Panc1 (cell line): ENCODE measurements at regions of chr20 and their contacts with region 1.

Region 1: GRCh38 chr20:56735191-56735711 is 106.1 kb downstream of the TFAP2C start:
- DNase-seq: no peak
- ATAC-seq: no peak
- H3K4me3 ChIP-seq: no peak overlapping the region
- H3K27ac ChIP-seq: no peak overlapping the region
- H3K4me1 ChIP-seq: no peaks in the 10 kb centered on the region
- H3K27me3 ChIP-seq: no peaks in the 10 kb centered on the region
- CTCF ChIP-seq: no peak

Region 2: DNA sequence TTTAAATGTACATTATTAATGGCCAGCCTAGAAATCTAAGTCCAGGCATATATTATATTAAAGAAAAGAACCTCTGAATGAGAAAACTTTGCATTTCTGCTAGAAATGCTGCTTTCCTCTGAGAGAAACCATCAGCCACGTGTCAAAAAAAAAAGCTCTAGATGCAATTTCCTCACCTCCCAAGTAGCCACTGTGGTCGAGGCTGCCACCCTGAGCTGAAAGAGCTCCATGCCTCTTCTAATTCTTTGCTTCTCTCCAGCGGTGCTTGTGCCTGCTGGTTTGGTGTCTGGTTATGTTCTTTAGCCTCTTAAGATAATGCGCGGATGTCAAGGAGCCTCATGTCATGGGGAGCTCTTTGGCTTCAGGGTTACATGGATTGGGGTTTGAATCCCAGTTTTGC is 209.8 kb after region 1 on chr20:
- CTCF ChIA-PET with region 1: no interaction called
- POLR2A ChIA-PET with region 1: interaction called, 12 read pairs
- in situ Hi-C with region 1: no loop called
- intact Hi-C with region 1: no loop called
- DNase-seq: no peak
- ATAC-seq: no peak
- H3K4me3 ChIP-seq: no peak overlapping the region
- H3K27ac ChIP-seq: no peak overlapping the region
- H3K4me1 ChIP-seq: no peaks in the 10 kb centered on the region
- H3K27me3 ChIP-seq: no peaks in the 10 kb centered on the region
- CTCF ChIP-seq: no peak; the same call in 1 of the 2 replicates

Region 3: GRCh38 chr20:58573986-58574866 is 1839.0 kb after region 1 on chr20:
- CTCF ChIA-PET with region 1: no interaction called
- POLR2A ChIA-PET with region 1: interaction called, 21 read pairs
- in situ Hi-C with region 1: no loop called
- intact Hi-C with region 1: no loop called
- DNase-seq: no peak
- ATAC-seq: no peak
- H3K4me3 ChIP-seq: no peak overlapping the region
- H3K27ac ChIP-seq: peak overlapping the region; percentile 69; the same call in 1 of the 2 replicates
- H3K4me1 ChIP-seq: 0 out of 2 replicates have a peak, but pooled peaks cover 15% of the 10 kb centered on the region
- H3K27me3 ChIP-seq: no peaks in the 10 kb centered on the region; the same call in 1 of the 2 replicates
- CTCF ChIP-seq: no peak